CD4-positive, alpha-beta memory T cell (primary cell): ENCODE measurements at regions of chr17 and their contacts with region 1.

Region 1: GRCh38 chr17:4498461-4499397 is at the start of gene SPNS2:
- DNase-seq: peak; percentile 44 to 69 (median 62)
- H3K4me3 ChIP-seq: peak within 1 kb of the TSS in 1 of 2 donors; percentile 35
- H3K4me3 Mint-ChIP-seq: peak within 1 kb of the TSS; percentile 83 to 93 (median 86)
- H3K27ac ChIP-seq: no peak within 1 kb of the TSS
- H3K27ac Mint-ChIP-seq: peak within 1 kb of the TSS in 3 of 7 donors; percentile 23 to 84 (median 76)
- H3K4me1 ChIP-seq: peaks cover 23% of the 10 kb centered on the region
- H3K4me1 Mint-ChIP-seq: peaks cover 12 to 25% (median 16%) of the 10 kb centered on the region in 4 donors
- H3K27me3 ChIP-seq: peaks cover 30% of the 10 kb centered on the region
- H3K27me3 Mint-ChIP-seq: peaks cover 16 to 22% of the 10 kb centered on the region in 2 donors
- total RNA-seq, gene SPNS2: 0.11 to 0.12 TPM

Region 2: GRCh38 chr17:4485654-4486646 is 12.8 kb before region 1 on chr17:
- CTCF ChIA-PET with region 1: interaction called, 3 read pairs
- POLR2A ChIA-PET with region 1: interaction called, 17 read pairs
- intact Hi-C with region 1: no loop called
- DNase-seq: peak in 4 of 5 donors; percentile 41 to 49 (median 44)
- H3K4me3 ChIP-seq: peak overlapping the region; percentile 30 to 66
- H3K4me3 Mint-ChIP-seq: peak overlapping the region; percentile 89 to 95 (median 91)
- H3K27ac ChIP-seq: peak overlapping the region; percentile 48
- H3K27ac Mint-ChIP-seq: peak overlapping the region; percentile 77 to 96 (median 91)
- H3K4me1 ChIP-seq: peaks cover 51% of the 10 kb centered on the region
- H3K4me1 Mint-ChIP-seq: peaks cover 21 to 62% (median 41%) of the 10 kb centered on the region in 4 donors
- H3K27me3 ChIP-seq: no peaks in the 10 kb centered on the region
- H3K27me3 Mint-ChIP-seq: no peaks in the 10 kb centered on the region

Region 3: GRCh38 chr17:4540224-4540641 is 41.5 kb after region 1 on chr17:
- CTCF ChIA-PET with region 1: no interaction called
- POLR2A ChIA-PET with region 1: no interaction called
- intact Hi-C with region 1: no loop called
- DNase-seq: no peak
- H3K4me3 ChIP-seq: no peak overlapping the region
- H3K4me3 Mint-ChIP-seq: no peak overlapping the region
- H3K27ac ChIP-seq: no peak overlapping the region
- H3K27ac Mint-ChIP-seq: no peak overlapping the region
- H3K4me1 ChIP-seq: no peaks in the 10 kb centered on the region
- H3K4me1 Mint-ChIP-seq: peaks cover 0 to 4% (median 0%) of the 10 kb centered on the region in 4 donors
- H3K27me3 ChIP-seq: no peaks in the 10 kb centered on the region
- H3K27me3 Mint-ChIP-seq: no peaks in the 10 kb centered on the region